Caco-2 (cell line): ENCODE measurements at regions of chr3 and their contacts with region 1.

Region 1: GRCh38 chr3:139655909-139656595 is 21.7 kb downstream of the NMNAT3 start:
- DNase-seq: no peak
- H3K4me3 ChIP-seq: no peak overlapping the region
- H3K4me3 Mint-ChIP-seq: peak overlapping the region; percentile 58
- H3K27ac Mint-ChIP-seq: peak overlapping the region; percentile 55
- H3K4me1 ChIP-seq: peaks cover 92% of the 10 kb centered on the region
- H3K4me1 Mint-ChIP-seq: peaks cover 27% of the 10 kb centered on the region
- H3K27me3 ChIP-seq: no peaks in the 10 kb centered on the region
- H3K27me3 Mint-ChIP-seq: no peaks in the 10 kb centered on the region
- CTCF ChIP-seq: no peak

Region 2: DNA sequence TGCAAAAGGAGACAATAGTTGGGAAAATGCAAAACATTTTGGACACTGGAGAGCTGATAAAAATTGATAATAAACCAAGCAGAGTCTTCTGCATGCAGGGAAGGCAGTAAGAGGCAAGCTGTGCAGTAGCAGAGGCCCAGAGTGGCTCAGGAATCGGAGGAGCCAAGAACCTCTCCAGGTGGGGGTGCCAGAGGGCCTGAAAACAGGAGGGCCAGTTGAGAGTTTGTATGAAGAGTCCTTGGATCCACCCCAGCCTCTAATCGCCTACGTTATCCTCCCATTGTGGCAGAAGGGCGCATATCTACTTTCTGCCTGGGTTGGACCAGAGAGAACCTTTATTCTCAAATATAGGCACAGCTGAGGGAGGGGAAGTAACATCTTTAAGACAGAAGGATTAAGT is 67.6 kb before region 1 on chr3:
- CTCF ChIA-PET with region 1: no interaction called
- POLR2A ChIA-PET with region 1: no interaction called
- intact Hi-C with region 1: loop called (anchors 2 kb)
- DNase-seq: peak; percentile 63 to 71
- H3K4me3 ChIP-seq: no peak overlapping the region
- H3K4me3 Mint-ChIP-seq: no peak overlapping the region
- H3K27ac Mint-ChIP-seq: no peak overlapping the region
- H3K4me1 ChIP-seq: no peaks in the 10 kb centered on the region; the same call in 1 of the 2 replicates
- H3K4me1 Mint-ChIP-seq: peaks cover 12% of the 10 kb centered on the region
- H3K27me3 ChIP-seq: no peaks in the 10 kb centered on the region
- H3K27me3 Mint-ChIP-seq: no peaks in the 10 kb centered on the region
- CTCF ChIP-seq: peak; percentile 36 to 58

Region 3: GRCh38 chr3:139629033-139629432 is 27.0 kb before region 1 on chr3:
- CTCF ChIA-PET with region 1: no interaction called
- POLR2A ChIA-PET with region 1: interaction called, 3 read pairs
- intact Hi-C with region 1: loop called (anchors 2 kb)
- DNase-seq: peak; percentile 61 to 67
- H3K4me3 ChIP-seq: no peak overlapping the region
- H3K4me3 Mint-ChIP-seq: no peak overlapping the region
- H3K27ac Mint-ChIP-seq: peak overlapping the region; percentile 67
- H3K4me1 ChIP-seq: peaks cover 18% of the 10 kb centered on the region
- H3K4me1 Mint-ChIP-seq: peaks cover 18% of the 10 kb centered on the region
- H3K27me3 ChIP-seq: no peaks in the 10 kb centered on the region
- H3K27me3 Mint-ChIP-seq: no peaks in the 10 kb centered on the region
- CTCF ChIP-seq: peak; percentile 25 to 64

Region 4: GRCh38 chr3:139677388-139678155 is 21.5 kb after region 1 on chr3 and contains the start of gene NMNAT3:
- CTCF ChIA-PET with region 1: no interaction called
- POLR2A ChIA-PET with region 1: no interaction called
- intact Hi-C with region 1: loop called (anchors 1 kb)
- DNase-seq: peak; percentile 85 to 87
- H3K4me3 ChIP-seq: peak within 1 kb of the TSS; percentile 65
- H3K4me3 Mint-ChIP-seq: peak within 1 kb of the TSS; percentile 82
- H3K27ac Mint-ChIP-seq: peak within 1 kb of the TSS; percentile 66
- H3K4me1 ChIP-seq: 0 out of 2 replicates have a peak, but pooled peaks cover 7% of the 10 kb centered on the region
- H3K4me1 Mint-ChIP-seq: peaks cover 7% of the 10 kb centered on the region
- H3K27me3 ChIP-seq: no peaks in the 10 kb centered on the region
- H3K27me3 Mint-ChIP-seq: no peaks in the 10 kb centered on the region
- CTCF ChIP-seq: peak in 1 of 2 experiments; percentile 31
- total RNA-seq, gene NMNAT3: 17.5 and 17.6 TPM in 2 replicates

Region 5: GRCh38 chr3:139758654-139759291 is 102.7 kb after region 1 on chr3:
- CTCF ChIA-PET with region 1: no interaction called
- POLR2A ChIA-PET with region 1: no interaction called
- intact Hi-C with region 1: loop called (anchors 1 kb)
- DNase-seq: peak; percentile 80 to 92
- H3K4me3 ChIP-seq: no peak overlapping the region
- H3K4me3 Mint-ChIP-seq: peak overlapping the region; percentile 15
- H3K27ac Mint-ChIP-seq: peak overlapping the region; percentile 74
- H3K4me1 ChIP-seq: peaks cover 29% of the 10 kb centered on the region
- H3K4me1 Mint-ChIP-seq: no peaks in the 10 kb centered on the region
- H3K27me3 ChIP-seq: no peaks in the 10 kb centered on the region
- H3K27me3 Mint-ChIP-seq: no peaks in the 10 kb centered on the region
- CTCF ChIP-seq: no peak

Region 6: GRCh38 chr3:140051019-140051957 is 395.2 kb after region 1 on chr3:
- CTCF ChIA-PET with region 1: no interaction called
- POLR2A ChIA-PET with region 1: no interaction called
- intact Hi-C with region 1: loop called (anchors 2 kb)
- DNase-seq: peak in 1 of 2 experiments; percentile 34
- H3K4me3 ChIP-seq: no peak overlapping the region
- H3K4me3 Mint-ChIP-seq: no peak overlapping the region
- H3K27ac Mint-ChIP-seq: peak overlapping the region; percentile 50
- H3K4me1 ChIP-seq: peaks cover 41% of the 10 kb centered on the region
- H3K4me1 Mint-ChIP-seq: peaks cover 34% of the 10 kb centered on the region
- H3K27me3 ChIP-seq: no peaks in the 10 kb centered on the region
- H3K27me3 Mint-ChIP-seq: no peaks in the 10 kb centered on the region
- CTCF ChIP-seq: peak in 1 of 2 experiments; percentile 54